Head of caudate nucleus (tissue), 42 donors: ENCODE measurements at regions of chr21 and their contacts with region 1.

Region 1: GRCh38 chr21:26170471-26171257 is at the start of gene APP:
- DNase-seq: peak; percentile 57 to 96 (median 90)

Region 2: GRCh38 chr21:25734904-25735645 is 435.6 kb before region 1 on chr21 and contains the starts of genes ATP5PF and GABPA:
- intact Hi-C with region 1: loop called (anchors 10 kb)
- DNase-seq: peak; percentile 93 to 99 (median 97)

Region 3: GRCh38 chr21:25881525-25882376 is 288.9 kb before region 1 on chr21:
- intact Hi-C with region 1: loop called (anchors 5 kb)
- DNase-seq: peak; percentile 18 to 93 (median 77)

Region 4: GRCh38 chr21:26116456-26117011 is 54.1 kb before region 1 on chr21:
- intact Hi-C with region 1: loop called (anchors 10 kb)
- DNase-seq: no peak

Region 5: DNA sequence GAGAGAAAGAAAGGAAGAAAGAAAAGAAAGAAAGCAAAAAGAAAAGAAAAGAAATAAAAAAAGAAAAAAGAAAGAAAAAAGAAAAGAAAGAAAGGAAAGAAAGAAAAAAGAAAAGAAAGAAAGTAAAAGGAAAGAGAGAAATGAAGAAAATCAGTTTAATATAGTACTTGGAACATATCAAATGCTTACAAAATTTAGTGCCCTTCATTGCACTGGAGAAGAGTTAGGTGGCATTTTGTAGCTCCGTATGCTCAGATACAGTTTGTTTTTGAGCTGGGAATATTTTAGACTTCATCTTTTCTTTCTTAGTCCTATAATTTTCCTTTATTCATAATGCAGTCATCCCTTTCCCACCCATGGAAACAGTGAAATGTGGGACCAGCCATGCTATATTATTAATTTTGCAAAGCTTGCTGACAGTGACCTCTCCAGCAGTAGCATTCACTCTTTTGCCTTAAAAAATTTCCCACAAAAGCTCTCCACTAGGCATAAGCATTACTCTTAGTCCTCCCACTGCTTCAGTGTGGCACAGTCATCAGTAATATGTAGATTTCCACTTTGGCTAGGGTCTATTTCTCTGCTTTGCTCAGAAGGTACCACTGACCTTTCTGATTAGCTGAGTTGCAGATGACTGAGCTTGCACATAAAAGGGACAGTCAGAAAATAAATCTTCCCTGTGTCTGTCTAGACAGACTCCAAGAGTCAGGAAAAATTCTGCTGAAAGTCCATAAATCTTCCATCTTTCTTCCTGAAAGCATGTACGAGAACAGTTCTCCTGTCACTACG is 56.3 kb after region 1 on chr21:
- intact Hi-C with region 1: no loop called
- DNase-seq: no peak

Region 6: GRCh38 chr21:26280775-26281174 is 110.1 kb after region 1 on chr21:
- intact Hi-C with region 1: no loop called
- DNase-seq: no peak